ENCODE measurements at regions of chrX and their contacts with region 1.

Region 1: DNA sequence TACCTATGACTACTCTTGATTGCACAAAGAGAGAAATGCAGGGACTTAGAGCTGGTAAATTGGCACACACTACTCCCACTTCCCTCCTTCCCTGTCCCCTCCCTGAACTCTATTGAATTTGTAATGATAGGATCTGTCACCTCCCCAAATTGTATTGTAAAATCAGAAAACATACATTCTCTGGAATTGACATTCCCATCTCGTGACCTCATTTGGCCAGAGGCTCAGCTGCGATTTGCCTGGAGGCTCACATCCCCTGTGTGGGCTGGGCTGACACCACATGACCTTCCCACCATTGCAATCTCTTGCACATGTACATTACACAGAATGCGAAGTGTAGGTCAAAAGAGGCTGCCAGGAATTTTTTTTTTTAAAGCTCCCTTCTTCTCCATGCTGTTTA is 172.1 kb downstream of the MID1IP1 start:
- DNase-seq: no peak
- H3K4me3 Mint-ChIP-seq: no peak overlapping the region
- H3K27ac Mint-ChIP-seq: no peak overlapping the region
- H3K4me1 Mint-ChIP-seq: peaks cover 11% of the 10 kb centered on the region
- H3K27me3 Mint-ChIP-seq: no peaks in the 10 kb centered on the region

Region 2: DNA sequence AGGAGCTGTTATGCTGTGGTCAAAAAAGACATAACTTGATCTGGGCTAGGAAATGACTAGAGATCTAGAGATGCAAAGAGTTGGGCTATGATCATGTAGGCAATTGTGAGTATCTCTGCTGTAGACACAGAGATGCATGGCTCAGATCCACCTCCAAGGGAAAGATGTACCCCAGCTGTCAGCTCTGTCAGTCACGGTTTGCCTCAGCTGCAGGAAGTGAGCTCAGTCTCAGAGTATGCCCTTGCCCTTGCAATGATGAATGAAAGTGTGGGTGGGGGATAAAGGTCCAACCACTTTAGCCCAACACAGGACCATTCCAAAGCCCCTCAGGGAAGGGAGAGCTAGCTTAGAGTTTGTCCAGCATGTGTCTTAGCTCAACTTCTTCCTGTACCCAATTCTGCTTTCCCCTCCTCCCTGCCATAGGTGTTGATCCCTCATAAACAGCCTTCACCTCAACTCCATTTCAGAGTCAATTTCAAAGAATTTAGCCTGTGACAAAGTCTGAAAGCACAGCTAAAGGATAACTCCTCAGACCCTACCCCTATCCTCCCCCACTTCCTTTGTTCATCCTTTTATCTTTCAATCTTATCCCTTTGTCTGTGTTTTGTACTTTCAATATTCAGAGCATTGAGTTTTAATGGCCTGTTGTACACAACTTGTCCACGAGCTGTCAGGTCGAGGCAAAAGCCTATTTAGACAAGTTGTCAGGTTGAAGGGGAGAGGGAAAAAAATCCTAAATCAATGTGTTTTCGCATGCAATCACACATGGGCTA is 81.5 kb before region 1 on chrX:
- intact Hi-C with region 1: loop called (anchors 2 kb)
- DNase-seq: peak; percentile 8
- H3K4me3 Mint-ChIP-seq: no peak overlapping the region
- H3K27ac Mint-ChIP-seq: peak overlapping the region; percentile 33
- H3K4me1 Mint-ChIP-seq: peaks cover 10% of the 10 kb centered on the region
- H3K27me3 Mint-ChIP-seq: no peaks in the 10 kb centered on the region

Region 3: GRCh38 chrX:39227371-39227770 is 254.1 kb after region 1 on chrX:
- intact Hi-C with region 1: no loop called
- DNase-seq: no peak
- H3K4me3 Mint-ChIP-seq: no peak overlapping the region
- H3K27ac Mint-ChIP-seq: no peak overlapping the region
- H3K4me1 Mint-ChIP-seq: peaks cover 27% of the 10 kb centered on the region
- H3K27me3 Mint-ChIP-seq: no peaks in the 10 kb centered on the region

Measured in activated T-helper 2 cell treated with anti-CD3 and anti-CD28 coated beads, Interferon-gamma antibody, Interleukin-2, Interleukin-4, amounts not matched to agents 10 μg/mL and 5 μg/mL and 100 μg/mL, durations not matched to agents 14 hours and 24 hours and 36 hours (primary cell).